Tibial artery (tissue), 4 donors: ENCODE measurements at regions of chr6 and their contacts with region 1.

Region 1: DNA sequence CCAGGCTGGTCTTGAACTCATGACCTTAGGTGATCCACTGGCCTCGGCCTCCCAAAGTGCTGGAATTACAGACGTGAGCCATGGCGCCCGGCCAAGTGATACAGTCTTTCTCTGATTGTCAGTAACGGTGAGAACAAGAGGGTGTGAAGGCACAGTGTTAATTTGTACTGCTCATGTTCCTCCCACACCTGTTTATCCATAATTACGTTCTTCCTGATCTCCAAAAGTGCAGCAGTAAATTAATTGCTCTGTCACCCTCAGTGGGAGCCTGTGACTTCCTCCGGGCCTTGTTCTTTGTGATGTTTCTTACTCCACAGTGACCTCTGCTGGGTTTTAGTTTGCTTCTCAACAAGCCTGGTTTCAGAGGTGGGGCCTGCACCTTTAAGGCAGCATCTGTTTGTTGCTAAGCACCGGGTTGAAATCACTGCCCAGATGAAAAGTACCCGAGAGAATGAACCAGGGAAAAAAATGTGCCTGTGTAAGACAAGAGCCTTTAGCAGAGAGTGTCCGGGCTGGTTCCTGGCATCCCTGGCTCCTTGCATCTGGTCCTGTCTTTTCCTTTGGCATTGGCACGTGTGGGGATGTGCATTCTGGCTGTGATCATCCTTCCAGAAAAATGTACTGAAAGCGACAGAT is 89.1 kb upstream of the CLDN20 start:
- DNase-seq: peak in 1 of 2 donors; percentile 55
- H3K4me3 ChIP-seq: no peak overlapping the region
- H3K27ac ChIP-seq: no peak overlapping the region
- H3K4me1 ChIP-seq: peaks cover 0 to 23% (median 15%) of the 10 kb centered on the region in 4 donors
- H3K27me3 ChIP-seq: no peaks in the 10 kb centered on the region
- CTCF ChIP-seq: peak; percentile 62 to 68

Region 2: DNA sequence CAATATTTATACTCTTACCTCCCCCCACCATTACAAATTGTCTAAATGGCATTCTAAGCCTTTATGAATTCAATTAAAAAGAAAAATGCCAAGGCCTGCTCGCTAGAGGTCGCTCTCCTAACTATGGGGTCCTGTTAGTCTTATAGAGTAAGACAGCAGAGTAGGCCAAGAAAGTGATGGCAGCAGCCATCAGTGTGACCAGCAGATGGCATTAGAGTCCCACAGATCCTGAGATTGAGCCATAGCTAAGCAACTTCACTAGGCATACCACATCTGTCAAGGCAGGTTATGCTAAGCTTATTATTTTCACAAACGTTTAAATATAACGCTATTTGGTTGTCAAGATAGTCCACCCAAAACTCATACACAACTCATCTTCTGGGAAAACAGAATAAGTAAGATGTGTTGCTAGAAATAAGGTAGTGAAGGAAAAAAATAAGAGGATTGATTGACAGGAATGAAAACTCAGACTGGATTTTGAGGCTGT is 499.0 kb before region 1 on chr6:
- intact Hi-C with region 1: loop called (anchors 5 kb)
- DNase-seq: peak; percentile 91 to 93
- H3K4me3 ChIP-seq: no peak overlapping the region
- H3K27ac ChIP-seq: no peak overlapping the region
- H3K4me1 ChIP-seq: no peaks in the 10 kb centered on the region
- H3K27me3 ChIP-seq: no peaks in the 10 kb centered on the region
- CTCF ChIP-seq: peak; percentile 99

Region 3: DNA sequence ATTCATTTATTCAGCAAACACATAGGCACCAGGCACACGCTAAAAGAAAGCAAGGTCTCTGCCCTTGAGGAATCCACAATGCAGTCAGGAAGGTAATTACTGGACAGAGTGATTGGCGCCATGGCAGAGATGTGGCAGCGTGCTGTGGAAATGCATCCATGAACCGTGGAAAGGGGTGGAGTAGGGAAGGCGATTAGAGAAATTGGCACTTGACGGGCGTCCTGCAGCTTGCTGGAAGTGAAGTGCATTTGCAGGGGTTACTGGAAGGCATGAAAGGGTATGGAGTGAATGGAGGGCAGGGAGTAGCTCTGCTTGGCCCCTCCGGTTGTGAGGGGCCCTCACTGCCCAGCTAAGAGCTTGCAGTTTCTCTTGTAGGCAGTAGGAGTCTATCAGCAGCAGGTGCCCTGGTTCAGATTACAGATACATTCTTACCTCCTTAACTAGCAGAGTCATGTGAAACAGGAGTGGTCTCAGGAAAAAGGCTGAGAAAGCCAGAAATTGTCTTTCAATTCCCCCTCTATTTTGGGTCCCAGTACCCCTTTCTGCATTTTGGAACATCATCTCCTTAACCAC is 302.1 kb before region 1 on chr6:
- intact Hi-C with region 1: loop called (anchors 5 kb)
- DNase-seq: no peak
- H3K4me3 ChIP-seq: no peak overlapping the region
- H3K27ac ChIP-seq: no peak overlapping the region
- H3K4me1 ChIP-seq: peaks cover 0 to 11% (median 0%) of the 10 kb centered on the region in 4 donors
- H3K27me3 ChIP-seq: no peaks in the 10 kb centered on the region
- CTCF ChIP-seq: no peak

Region 4: DNA sequence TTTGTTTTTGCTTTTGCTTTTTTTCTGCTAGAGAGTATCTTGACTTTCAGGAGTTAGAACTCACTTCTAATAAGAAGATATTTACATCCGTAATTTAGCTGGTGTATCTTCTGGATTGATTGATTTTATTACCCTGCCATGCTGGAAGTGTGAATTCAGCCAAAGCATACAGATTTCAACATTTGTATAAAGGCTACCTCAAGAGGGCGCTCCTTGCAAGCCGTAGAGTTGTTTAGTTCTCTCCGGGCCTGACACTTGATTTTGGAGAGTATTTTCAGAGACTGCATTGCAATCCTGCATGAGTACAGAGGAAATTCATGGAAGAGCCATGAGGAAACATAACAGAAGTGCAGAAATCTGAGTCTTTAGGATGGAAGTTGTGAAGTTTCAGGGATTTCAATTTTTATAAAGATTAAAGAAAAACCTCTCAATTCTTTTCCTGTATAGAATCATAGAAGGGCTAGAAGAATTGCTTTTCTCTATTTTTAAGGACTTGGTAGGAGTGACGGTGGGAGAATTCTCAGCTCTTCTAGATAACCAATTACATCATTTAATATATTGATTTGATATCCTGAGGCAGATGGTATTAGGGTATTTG is 246.3 kb before region 1 on chr6:
- intact Hi-C with region 1: loop called (anchors 2 kb)
- DNase-seq: peak in 1 of 2 donors; percentile 55
- H3K4me3 ChIP-seq: no peak overlapping the region
- H3K27ac ChIP-seq: no peak overlapping the region
- H3K4me1 ChIP-seq: peaks cover 0 to 9% (median 3%) of the 10 kb centered on the region in 4 donors
- H3K27me3 ChIP-seq: no peaks in the 10 kb centered on the region
- CTCF ChIP-seq: peak; percentile 67 to 82

Region 5: DNA sequence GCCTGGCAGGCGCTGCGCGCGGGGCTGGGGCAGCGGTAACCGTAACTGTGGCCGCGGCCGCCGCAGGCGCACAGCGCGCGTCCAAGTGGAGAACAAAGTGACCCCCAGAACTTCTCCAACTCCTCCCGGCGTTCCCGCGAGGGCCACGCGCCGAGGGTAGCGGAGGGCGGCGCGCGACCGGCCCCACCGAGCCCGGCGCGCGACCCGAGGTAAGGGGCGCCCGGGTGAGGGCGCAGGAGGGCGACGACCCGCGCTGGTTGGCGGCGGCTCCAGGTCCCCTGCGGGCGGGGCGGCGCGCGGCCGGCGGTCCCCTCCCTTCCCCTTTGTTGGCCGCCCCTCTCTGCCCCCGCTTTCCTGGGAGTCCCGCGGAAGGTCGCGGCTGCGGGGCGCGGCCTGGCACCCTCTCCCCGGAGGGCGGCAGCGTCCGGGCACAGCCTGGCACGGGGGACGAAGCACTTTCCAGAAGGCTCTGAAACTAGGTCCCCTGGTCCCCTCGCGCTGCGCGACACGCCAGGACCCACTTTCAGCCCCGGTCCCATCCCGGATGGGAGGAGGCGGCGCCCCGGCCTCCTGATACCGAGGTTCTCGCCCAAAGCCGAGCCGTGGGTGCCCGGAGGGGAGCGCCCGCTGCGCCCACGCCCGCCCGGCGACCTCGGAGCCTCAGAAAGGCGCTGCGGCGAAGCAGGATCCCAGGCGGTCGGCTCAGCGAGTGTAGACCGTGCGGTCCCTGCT is 179.2 kb before region 1 on chr6 and contains the start of gene TIAM2:
- intact Hi-C with region 1: loop called (anchors 5 kb)
- DNase-seq: no peak
- H3K4me3 ChIP-seq: peak within 1 kb of the TSS; percentile 60 to 91
- H3K27ac ChIP-seq: peak within 1 kb of the TSS; percentile 52 to 73
- H3K4me1 ChIP-seq: peaks cover 0 to 9% (median 4%) of the 10 kb centered on the region in 4 donors
- H3K27me3 ChIP-seq: no peaks in the 10 kb centered on the region
- CTCF ChIP-seq: no peak

Region 6: GRCh38 chr6:155248008-155249001 is 73.6 kb after region 1 on chr6:
- intact Hi-C with region 1: loop called (anchors 2 kb)
- DNase-seq: peak in 1 of 2 donors; percentile 31
- H3K4me3 ChIP-seq: no peak overlapping the region
- H3K27ac ChIP-seq: peak overlapping the region in 1 of 2 donors; percentile 17
- H3K4me1 ChIP-seq: peaks cover 0 to 18% (median 4%) of the 10 kb centered on the region in 4 donors
- H3K27me3 ChIP-seq: no peaks in the 10 kb centered on the region
- CTCF ChIP-seq: peak; percentile 68 to 71